ENCODE measurements at regions of chr2 and their contacts with region 1.

Region 1: DNA sequence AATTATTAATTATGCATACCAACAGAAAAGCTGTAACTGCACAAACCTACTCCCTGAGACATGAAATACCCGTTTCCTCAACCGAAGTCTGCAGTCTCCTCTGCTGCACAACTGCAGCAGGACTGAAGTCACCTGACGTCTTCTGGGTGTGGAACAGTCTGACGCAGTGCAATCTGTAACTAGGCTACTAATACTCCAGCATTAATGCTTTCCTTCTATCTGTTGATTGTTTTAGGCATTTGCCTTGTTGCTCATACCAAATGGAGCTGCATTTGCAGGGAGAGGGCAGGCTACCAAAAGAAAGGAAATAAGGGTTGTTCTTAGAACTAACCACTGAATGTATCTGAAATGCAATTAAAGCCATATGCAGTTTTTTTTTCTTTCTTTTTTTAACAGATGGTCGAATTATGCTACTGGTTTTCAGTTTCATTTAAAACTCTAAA is 40.1 kb downstream of the RTN4 start:
- DNase-seq: no peak
- H3K4me3 ChIP-seq: no peak overlapping the region
- H3K27ac ChIP-seq: 0 out of 2 replicates have a peak overlapping the region, but pooled peaks have one; percentile 14
- H3K4me1 ChIP-seq: peaks cover 77% of the 10 kb centered on the region
- H3K27me3 ChIP-seq: no peaks in the 10 kb centered on the region
- CTCF ChIP-seq: no peak

Region 2: DNA sequence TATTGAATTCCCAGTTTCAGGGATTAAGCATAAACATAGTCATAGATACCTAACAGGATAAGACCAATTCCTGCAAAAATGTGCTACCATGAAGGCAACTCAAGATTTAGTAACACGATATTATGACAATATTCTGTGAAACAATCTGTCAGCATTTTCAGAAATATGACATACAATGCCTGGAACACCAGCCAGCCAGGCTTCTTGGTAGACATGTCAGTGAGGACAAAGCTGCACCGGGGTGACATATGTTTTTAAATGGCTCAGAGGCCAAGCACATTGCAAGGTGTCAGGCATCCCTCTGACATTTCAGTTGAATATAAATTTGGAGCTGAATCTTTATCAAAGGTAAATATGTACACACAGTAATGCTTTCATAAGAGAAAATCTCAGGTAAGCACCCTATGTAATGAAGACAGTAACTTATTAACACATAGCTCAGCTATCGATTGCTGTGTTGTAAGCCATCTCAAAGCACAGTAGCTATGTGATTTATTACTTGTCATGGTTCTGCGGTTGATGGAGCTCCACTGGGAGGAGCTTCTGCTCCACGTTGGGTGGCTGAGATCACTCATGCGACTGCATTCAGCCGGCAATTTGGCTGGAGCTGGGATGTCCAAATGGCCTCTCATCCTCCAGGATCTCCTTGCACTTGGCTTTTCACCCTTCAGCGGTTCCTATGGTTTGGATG is 318.6 kb before region 1 on chr2:
- CTCF ChIA-PET with region 1: no interaction called
- POLR2A ChIA-PET with region 1: no interaction called
- intact Hi-C with region 1: no loop called
- DNase-seq: no peak
- H3K4me3 ChIP-seq: no peak overlapping the region
- H3K27ac ChIP-seq: no peak overlapping the region
- H3K4me1 ChIP-seq: no peaks in the 10 kb centered on the region
- H3K27me3 ChIP-seq: no peaks in the 10 kb centered on the region
- CTCF ChIP-seq: no peak

Region 3: DNA sequence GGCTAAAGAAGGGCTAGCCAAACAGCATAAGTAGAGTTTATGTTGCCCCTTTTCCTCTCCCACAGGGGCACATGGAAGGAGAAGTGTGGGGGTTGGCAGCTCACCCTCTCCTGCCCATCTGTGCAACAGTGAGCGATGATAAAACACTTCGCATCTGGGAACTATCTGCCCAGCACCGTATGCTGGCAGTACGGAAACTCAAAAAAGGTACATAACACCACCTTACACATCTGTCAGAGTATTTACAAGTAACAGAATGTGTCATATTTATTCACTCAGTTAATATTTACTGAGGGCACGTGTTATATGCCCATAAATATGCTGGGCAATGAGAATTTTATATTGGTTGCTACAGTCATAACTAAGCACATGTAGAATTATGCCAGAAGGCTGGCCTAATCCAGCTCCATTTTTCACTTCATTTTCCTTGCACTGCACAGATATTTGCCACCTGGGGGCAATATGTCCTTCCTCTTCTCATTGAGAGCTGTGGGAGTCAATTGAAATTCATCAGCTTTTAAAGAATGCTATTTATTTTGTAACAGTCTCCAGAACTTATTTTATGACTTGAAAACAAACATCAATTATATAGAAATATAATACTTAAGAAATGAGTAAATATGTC is 110.5 kb before region 1 on chr2:
- CTCF ChIA-PET with region 1: no interaction called
- POLR2A ChIA-PET with region 1: no interaction called
- intact Hi-C with region 1: loop called (anchors 10 kb)
- DNase-seq: peak in 1 of 2 experiments; percentile 53
- H3K4me3 ChIP-seq: no peak overlapping the region
- H3K27ac ChIP-seq: no peak overlapping the region
- H3K4me1 ChIP-seq: peaks cover 23% of the 10 kb centered on the region
- H3K27me3 ChIP-seq: no peaks in the 10 kb centered on the region
- CTCF ChIP-seq: peak; percentile 76

Region 4: GRCh38 chr2:55073000-55073983 is 63.1 kb after region 1 on chr2:
- CTCF ChIA-PET with region 1: no interaction called
- POLR2A ChIA-PET with region 1: no interaction called
- intact Hi-C with region 1: no loop called
- DNase-seq: no peak
- H3K4me3 ChIP-seq: no peak overlapping the region
- H3K27ac ChIP-seq: no peak overlapping the region
- H3K4me1 ChIP-seq: 0 out of 2 replicates have a peak, but pooled peaks cover 4% of the 10 kb centered on the region
- H3K27me3 ChIP-seq: no peaks in the 10 kb centered on the region
- CTCF ChIP-seq: no peak

Measured in PC-9 (cell line).